Gastrocnemius medialis (tissue), 4 donors: ENCODE measurements at regions of chr17 and their contacts with region 1.

Region 1: GRCh38 chr17:75393523-75394331 is 11.8 kb downstream of the GRB2 start:
- DNase-seq: peak; percentile 96 to 98
- ATAC-seq: peak; percentile 97 to 98
- H3K4me3 ChIP-seq: peak overlapping the region; percentile 58 to 85 (median 66)
- H3K27ac ChIP-seq: peak overlapping the region; percentile 83 to 91 (median 87)
- H3K4me1 ChIP-seq: peaks cover 63 to 70% of the 10 kb centered on the region in 2 donors
- H3K27me3 ChIP-seq: no peaks in the 10 kb centered on the region
- CTCF ChIP-seq: peak in 2 of 5 experiments; percentile 25 to 50
- POLR2A ChIP-seq: peak; percentile 51 to 68

Region 2: GRCh38 chr17:75338335-75338734 is 55.4 kb before region 1 on chr17:
- in situ Hi-C with region 1: loop called in 1 of 4 experiments (anchors 10 kb)
- intact Hi-C with region 1: no loop called
- DNase-seq: no peak
- ATAC-seq: peak in 1 of 2 donors; percentile 36
- H3K4me3 ChIP-seq: no peak overlapping the region
- H3K27ac ChIP-seq: peak overlapping the region in 3 of 4 donors; percentile 3 to 29 (median 25)
- H3K4me1 ChIP-seq: peaks cover 14 to 39% of the 10 kb centered on the region in 2 donors
- H3K27me3 ChIP-seq: no peaks in the 10 kb centered on the region
- CTCF ChIP-seq: no peak
- POLR2A ChIP-seq: no peak

Region 3: DNA sequence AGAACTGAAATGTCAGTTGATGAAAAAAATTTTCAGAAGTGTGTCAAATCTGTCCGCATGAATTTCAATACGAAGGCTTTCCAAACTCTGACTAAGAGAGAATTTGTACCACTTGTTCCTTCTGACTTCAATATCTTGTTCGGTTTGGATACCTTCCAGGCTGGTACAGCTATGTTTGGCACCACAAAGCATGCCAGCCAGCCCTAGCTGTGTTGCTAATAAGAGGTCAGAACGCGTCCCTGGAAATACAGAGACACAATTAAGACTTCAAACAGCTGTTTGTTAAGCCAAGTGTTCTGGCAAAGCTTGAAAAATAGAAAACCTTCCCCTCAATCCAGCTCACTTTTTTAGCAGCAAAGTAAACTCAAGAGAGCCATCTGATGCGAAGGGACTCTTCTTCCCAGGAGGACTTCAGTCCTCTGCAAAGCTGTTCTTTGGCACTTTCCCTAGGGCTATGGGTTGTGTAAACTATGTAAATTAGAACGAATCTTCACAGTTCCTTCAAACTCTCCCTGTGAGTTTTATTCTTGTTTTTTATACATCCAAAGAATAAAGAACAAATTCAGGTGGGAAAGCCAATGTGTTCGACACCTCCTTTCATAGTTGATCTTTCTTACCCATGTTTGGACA is 23.3 kb before region 1 on chr17:
- in situ Hi-C with region 1: no loop called
- intact Hi-C with region 1: loop called (anchors 1 kb)
- DNase-seq: peak; percentile 66 to 74
- ATAC-seq: peak; percentile 97 to 99
- H3K4me3 ChIP-seq: no peak overlapping the region
- H3K27ac ChIP-seq: peak overlapping the region; percentile 61 to 85 (median 72)
- H3K4me1 ChIP-seq: peaks cover 63 to 67% of the 10 kb centered on the region in 2 donors
- H3K27me3 ChIP-seq: no peaks in the 10 kb centered on the region
- CTCF ChIP-seq: no peak
- POLR2A ChIP-seq: no peak